AG04450 (cell line): ENCODE measurements at regions of chr9 and their contacts with region 1.

Region 1: DNA sequence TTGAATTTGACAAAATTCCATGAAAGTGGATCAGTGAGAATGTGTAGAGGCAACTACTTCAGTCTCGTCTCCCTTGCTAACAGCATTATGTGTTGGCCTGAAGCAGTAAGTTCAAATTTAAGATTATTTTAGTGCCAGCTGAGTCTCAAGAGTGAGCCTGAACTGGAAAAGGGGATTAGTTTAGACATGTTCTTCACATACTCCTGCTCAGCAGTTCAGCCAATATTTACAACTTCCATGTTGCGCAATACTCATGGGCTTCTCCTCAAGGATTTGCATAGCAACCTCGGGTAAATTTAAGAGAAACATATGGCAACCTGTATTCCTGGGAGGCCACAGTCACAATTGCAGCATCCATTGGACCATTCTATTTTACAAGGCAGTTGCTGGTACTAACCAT is 553.8 kb downstream of the PTPRD start:
- DNase-seq: peak; percentile 13
- H3K4me3 ChIP-seq: no peak overlapping the region
- H3K27ac ChIP-seq: no peak overlapping the region
- H3K27me3 ChIP-seq: no peaks in the 10 kb centered on the region
- CTCF ChIP-seq: no peak

Region 2: GRCh38 chr9:9820436-9820835 is 238.6 kb before region 1 on chr9:
- CTCF ChIA-PET with region 1: no interaction called
- POLR2A ChIA-PET with region 1: no interaction called
- DNase-seq: no peak
- H3K4me3 ChIP-seq: no peak overlapping the region
- H3K27ac ChIP-seq: no peak overlapping the region
- H3K27me3 ChIP-seq: no peaks in the 10 kb centered on the region
- CTCF ChIP-seq: no peak

Region 3: GRCh38 chr9:10045598-10045997 is 13.4 kb before region 1 on chr9:
- CTCF ChIA-PET with region 1: interaction called, 11 read pairs
- POLR2A ChIA-PET with region 1: no interaction called
- DNase-seq: no peak
- H3K4me3 ChIP-seq: no peak overlapping the region
- H3K27ac ChIP-seq: no peak overlapping the region
- H3K27me3 ChIP-seq: no peaks in the 10 kb centered on the region
- CTCF ChIP-seq: peak; percentile 56